Transverse colon (tissue), 4 donors: ENCODE measurements at regions of chr11 and their contacts with region 1.

Region 1: DNA sequence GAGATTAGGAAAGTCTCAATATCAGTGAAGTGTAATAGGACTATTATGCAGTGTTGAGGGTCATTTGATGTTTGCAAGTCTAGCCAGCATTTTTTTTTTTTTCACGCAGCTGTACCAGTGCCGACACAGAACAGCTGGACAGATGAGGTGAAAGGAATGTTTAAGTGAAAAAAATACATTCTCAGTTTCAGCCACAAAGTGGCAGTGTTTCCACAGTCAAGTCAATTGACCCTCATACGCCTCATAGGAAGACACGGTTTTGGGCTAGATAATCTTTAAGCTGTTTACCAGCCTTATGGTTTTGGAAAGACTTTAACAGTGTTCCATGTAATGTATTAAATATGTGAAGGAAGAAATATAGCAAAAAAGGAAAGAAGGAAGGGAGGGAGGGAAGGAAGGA is 349.9 kb upstream of the ANO3 start:
- DNase-seq: no peak
- H3K4me3 ChIP-seq: no peak overlapping the region
- H3K27ac ChIP-seq: no peak overlapping the region
- H3K4me1 ChIP-seq: no peaks in the 10 kb centered on the region
- H3K27me3 ChIP-seq: no peaks in the 10 kb centered on the region
- CTCF ChIP-seq: peak; percentile 41 to 49 (median 45)
- EP300 ChIP-seq: no peak
- POLR2A ChIP-seq: no peak

Region 2: DNA sequence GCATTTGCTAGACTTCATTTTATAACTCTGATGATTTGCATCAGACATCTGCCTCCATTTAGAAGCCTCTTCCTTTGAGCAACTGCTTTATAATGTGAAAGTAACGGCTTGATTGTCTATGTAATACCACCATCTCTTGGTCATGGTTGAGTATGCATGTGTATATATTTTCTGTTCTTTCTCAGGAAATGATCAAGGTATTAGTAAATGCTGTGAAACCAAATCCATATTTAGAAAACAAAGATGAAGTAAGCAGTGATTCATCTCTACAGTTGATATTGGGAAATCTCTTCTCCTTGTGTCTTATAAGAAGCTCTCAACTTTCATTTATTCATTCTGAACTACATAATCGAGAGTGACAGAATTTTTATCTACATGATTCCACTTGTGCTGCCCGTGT is 245.3 kb after region 1 on chr11:
- in situ Hi-C with region 1: loop called in 1 of 4 experiments (anchors 10 kb)
- intact Hi-C with region 1: loop called (anchors 10 kb)
- DNase-seq: no peak
- H3K4me3 ChIP-seq: no peak overlapping the region
- H3K27ac ChIP-seq: no peak overlapping the region
- H3K4me1 ChIP-seq: no peaks in the 10 kb centered on the region
- H3K27me3 ChIP-seq: no peaks in the 10 kb centered on the region
- CTCF ChIP-seq: peak in 3 of 5 experiments; percentile 20 to 31 (median 23)
- EP300 ChIP-seq: no peak
- POLR2A ChIP-seq: no peak

Region 3: GRCh38 chr11:26254378-26254777 is 272.4 kb after region 1 on chr11:
- in situ Hi-C with region 1: loop called in 2 of 4 experiments (anchors 25 kb)
- intact Hi-C with region 1: no loop called
- DNase-seq: no peak
- H3K4me3 ChIP-seq: no peak overlapping the region
- H3K27ac ChIP-seq: no peak overlapping the region
- H3K4me1 ChIP-seq: no peaks in the 10 kb centered on the region
- H3K27me3 ChIP-seq: no peaks in the 10 kb centered on the region
- CTCF ChIP-seq: no peak
- EP300 ChIP-seq: no peak
- POLR2A ChIP-seq: no peak

Region 4: DNA sequence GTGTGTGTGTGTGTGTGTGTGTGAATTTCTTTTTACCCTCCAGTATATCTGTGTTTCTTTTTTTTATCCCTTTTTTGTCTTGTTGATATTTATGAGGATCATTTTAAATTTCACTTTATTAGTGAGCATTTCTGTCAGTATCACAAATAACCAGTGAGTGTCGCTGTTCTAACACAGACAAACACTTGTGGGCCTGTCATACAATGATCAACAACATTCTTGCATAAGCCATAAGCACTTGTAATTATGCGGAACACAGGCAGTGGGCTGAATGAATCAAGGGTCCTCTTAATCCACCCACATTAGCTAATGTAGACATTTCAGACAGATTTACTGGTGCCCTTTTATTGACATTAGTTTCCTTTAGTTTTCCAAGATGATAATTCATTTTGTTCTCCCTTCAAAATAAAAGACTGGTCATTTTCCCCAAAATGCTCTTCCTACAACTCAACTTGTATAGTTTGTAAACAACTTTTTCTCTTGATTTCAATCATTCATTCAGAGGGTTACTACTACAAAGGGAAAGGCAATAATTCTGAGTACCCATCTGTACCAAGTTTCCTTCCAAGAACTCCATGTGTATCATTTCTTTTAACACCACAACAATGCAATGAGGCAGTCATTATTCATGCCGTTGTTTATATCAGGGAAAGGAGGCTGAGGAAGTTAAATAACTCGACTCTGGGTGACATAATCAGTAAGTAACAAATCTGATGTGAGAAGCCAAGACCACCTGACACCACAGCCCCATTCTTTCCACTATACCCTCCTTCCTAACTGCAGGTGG is 315.4 kb after region 1 on chr11:
- in situ Hi-C with region 1: no loop called
- intact Hi-C with region 1: no loop called
- DNase-seq: no peak
- H3K4me3 ChIP-seq: no peak overlapping the region
- H3K27ac ChIP-seq: no peak overlapping the region
- H3K4me1 ChIP-seq: no peaks in the 10 kb centered on the region
- H3K27me3 ChIP-seq: no peaks in the 10 kb centered on the region
- CTCF ChIP-seq: peak; percentile 45 to 65 (median 50)
- EP300 ChIP-seq: no peak
- POLR2A ChIP-seq: no peak

Region 5: DNA sequence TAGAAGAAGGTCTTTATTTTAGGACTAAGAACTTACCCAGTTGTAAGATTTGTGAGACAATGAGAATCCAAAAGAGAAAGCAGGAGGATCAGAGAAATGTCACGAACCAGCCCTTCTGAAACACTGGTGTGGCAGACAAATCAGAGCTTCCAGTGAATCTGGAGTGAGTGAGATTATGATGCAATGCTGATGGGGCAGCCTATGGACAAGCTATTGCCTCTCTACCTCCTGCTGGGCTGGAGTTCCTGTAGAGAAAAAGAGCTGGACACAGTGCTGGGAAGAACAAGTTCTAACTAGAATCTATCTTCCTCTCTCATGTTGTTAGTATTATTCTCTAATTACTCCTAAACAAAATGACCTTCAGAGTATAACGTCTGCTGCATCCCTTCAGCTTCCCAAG is 337.9 kb after region 1 on chr11:
- in situ Hi-C with region 1: no loop called
- intact Hi-C with region 1: no loop called
- DNase-seq: no peak
- H3K4me3 ChIP-seq: no peak overlapping the region
- H3K27ac ChIP-seq: no peak overlapping the region
- H3K4me1 ChIP-seq: no peaks in the 10 kb centered on the region
- H3K27me3 ChIP-seq: no peaks in the 10 kb centered on the region
- CTCF ChIP-seq: no peak
- EP300 ChIP-seq: no peak
- POLR2A ChIP-seq: no peak